Ascending aorta (tissue), 2 donors: ENCODE measurements at regions of chr18 and their contacts with region 1.

Region 1: GRCh38 chr18:70205421-70206397 is at the start of gene RTTN:
- DNase-seq: peak; percentile 68 to 94
- H3K4me3 ChIP-seq: peak within 1 kb of the TSS; percentile 81 to 87
- H3K27ac ChIP-seq: peak within 1 kb of the TSS; percentile 97 to 99
- H3K4me1 ChIP-seq: peaks cover 0 to 5% of the 10 kb centered on the region in 2 donors
- H3K27me3 ChIP-seq: no peaks in the 10 kb centered on the region
- CTCF ChIP-seq: no peak
- total RNA-seq, gene RTTN: 9.5 TPM

Region 2: DNA sequence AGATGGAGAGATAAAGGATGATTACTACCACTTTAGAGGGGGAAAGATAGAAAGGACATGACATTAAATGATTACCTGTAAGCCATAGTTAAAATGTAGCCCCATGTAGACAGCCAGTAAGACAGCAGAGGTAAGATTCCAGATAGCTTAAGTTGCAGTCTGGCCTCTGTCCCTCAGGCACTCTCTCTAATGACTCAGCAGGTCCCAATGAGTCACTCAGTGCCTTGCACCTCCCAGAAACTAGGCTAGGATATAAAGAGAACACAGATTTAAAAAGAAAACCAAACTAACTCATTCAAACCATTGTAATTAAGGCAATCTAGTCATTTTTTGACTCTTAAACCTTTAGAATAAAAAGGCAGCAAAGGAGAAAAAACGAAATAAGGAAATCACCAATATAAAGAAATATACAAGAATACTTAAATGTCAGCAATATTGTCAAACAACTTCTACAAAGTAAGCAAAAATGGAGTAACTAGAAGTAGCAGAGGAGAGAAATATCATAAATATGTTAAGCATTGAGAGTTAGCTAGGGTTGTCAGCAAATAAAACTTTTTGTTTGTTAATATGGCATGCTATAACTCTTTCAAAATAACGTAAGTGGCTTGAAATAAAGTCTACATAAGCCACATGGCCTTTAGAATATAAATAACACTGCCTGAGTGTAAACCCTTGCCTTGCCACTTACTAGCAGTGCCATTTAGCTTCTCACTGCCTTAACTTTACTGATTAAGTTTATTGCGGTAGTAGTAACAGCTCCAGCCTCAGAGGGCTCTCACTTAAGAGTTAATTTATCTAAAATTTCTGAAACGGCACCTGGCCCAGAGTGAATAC is 131.6 kb after region 1 on chr18:
- intact Hi-C with region 1: loop called (anchors 1 kb)
- DNase-seq: peak; percentile 19 to 67
- H3K4me3 ChIP-seq: no peak overlapping the region
- H3K27ac ChIP-seq: peak overlapping the region; percentile 13 to 42
- H3K4me1 ChIP-seq: peaks cover 0 to 15% of the 10 kb centered on the region in 2 donors
- H3K27me3 ChIP-seq: no peaks in the 10 kb centered on the region
- CTCF ChIP-seq: no peak